Common myeloid progenitor, CD34-positive (primary cell): ENCODE measurements at regions of chr22 and their contacts with region 1.

Region 1: DNA sequence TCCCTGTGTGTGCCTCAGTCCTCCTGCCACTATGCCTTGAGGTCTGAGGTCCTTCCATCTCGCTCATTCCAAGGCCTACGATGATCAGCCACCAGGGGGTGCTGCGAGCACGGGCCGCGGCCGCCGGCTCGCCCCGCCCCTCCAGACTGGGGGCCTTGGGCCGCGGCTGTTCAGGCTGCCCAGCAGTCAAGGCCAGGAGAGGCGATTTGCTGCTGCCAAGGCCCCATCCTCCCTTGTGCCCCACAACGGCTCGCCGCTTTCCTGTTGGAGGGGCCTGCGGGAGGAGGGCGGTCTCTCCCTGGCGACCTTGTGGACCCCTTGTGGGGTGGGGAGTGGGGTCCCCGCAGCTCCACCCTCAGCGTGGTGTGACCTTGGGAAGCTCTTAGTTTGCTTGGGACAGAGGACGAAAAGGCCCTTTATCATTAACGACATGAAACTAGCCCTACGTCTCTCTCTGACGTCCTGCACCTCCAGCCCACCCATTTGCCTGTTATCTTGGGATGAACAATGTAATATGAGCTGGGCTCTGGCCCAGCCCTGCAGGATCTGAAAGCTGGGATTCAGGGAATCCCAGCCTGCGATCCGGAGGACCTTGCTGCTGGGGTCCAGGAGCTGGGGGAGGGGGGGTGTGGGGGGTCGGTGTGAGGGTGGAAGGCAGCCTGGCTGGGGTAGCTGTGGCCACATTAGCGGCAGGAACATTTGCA is 5.3 kb upstream of the GALR3 start:
- DNase-seq: peak in 2 of 3 donors; percentile 71 to 77
- H3K4me3 ChIP-seq: peak overlapping the region in 6 of 7 experiments; percentile 8 to 70 (median 40)
- H3K27ac ChIP-seq: no peak overlapping the region
- H3K4me1 ChIP-seq: peaks cover 0 to 21% (median 17%) of the 10 kb centered on the region in 4 experiments
- H3K27me3 ChIP-seq: peaks cover 0 to 16% (median 7%) of the 10 kb centered on the region in 5 experiments

Region 2: DNA sequence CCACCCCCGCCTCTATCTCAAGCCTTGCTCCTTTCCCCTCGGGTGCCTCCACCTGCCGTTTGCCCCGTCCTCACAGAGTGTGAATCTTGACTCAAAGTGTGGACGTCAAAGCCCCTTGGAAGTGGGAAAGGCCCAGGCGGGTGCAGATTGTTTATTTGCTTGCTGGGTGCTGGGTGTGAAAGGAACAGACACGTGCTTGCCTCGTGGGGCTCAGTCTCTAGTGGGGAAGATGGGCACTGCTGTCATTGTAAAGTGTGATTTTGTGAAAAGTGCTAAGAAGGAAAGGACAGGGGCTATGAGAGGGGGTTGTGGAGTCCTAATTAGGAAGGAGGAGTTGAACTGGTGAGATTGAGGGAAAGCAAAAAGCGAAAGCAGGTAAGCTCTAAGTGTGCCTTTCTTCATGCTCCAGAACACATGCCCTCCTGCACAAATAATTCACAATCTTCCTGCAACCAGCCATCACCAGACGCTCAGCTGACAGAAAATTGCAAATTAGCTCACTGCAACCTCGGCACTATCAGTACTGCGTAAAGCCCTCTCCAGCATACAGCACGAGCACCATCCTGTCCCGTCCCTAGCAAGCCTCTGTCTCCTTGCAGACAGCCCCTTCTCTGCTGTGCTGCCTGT is 19.9 kb before region 1 on chr22:
- CTCF ChIA-PET with region 1: no interaction called
- POLR2A ChIA-PET with region 1: no interaction called
- DNase-seq: no peak
- H3K4me3 ChIP-seq: no peak overlapping the region
- H3K27ac ChIP-seq: no peak overlapping the region
- H3K4me1 ChIP-seq: peaks cover 4 to 11% (median 10%) of the 10 kb centered on the region in 4 experiments
- H3K27me3 ChIP-seq: no peaks in the 10 kb centered on the region

Region 3: GRCh38 chr22:37832022-37832857 is 14.4 kb after region 1 on chr22:
- CTCF ChIA-PET with region 1: interaction called, 39 read pairs
- POLR2A ChIA-PET with region 1: no interaction called
- DNase-seq: no peak
- H3K4me3 ChIP-seq: no peak overlapping the region
- H3K27ac ChIP-seq: no peak overlapping the region
- H3K4me1 ChIP-seq: no peaks in the 10 kb centered on the region
- H3K27me3 ChIP-seq: no peaks in the 10 kb centered on the region

Region 4: GRCh38 chr22:37855462-37855861 is 37.6 kb after region 1 on chr22:
- CTCF ChIA-PET with region 1: interaction called, 142 read pairs
- POLR2A ChIA-PET with region 1: no interaction called
- DNase-seq: no peak
- H3K4me3 ChIP-seq: no peak overlapping the region
- H3K27ac ChIP-seq: peak overlapping the region in 1 of 2 experiments; percentile 14
- H3K4me1 ChIP-seq: peaks cover 0 to 4% (median under 1%) of the 10 kb centered on the region in 4 experiments
- H3K27me3 ChIP-seq: no peaks in the 10 kb centered on the region

Region 5: GRCh38 chr22:37896181-37896592 is 78.3 kb after region 1 on chr22:
- CTCF ChIA-PET with region 1: interaction called, 10 read pairs
- POLR2A ChIA-PET with region 1: no interaction called
- DNase-seq: peak in 2 of 3 donors; percentile 54 to 61
- H3K4me3 ChIP-seq: peak overlapping the region in 4 of 7 experiments; percentile 6 to 48 (median 38)
- H3K27ac ChIP-seq: peak overlapping the region; percentile 0 to 63
- H3K4me1 ChIP-seq: peaks cover 6 to 44% (median 32%) of the 10 kb centered on the region in 4 experiments
- H3K27me3 ChIP-seq: no peaks in the 10 kb centered on the region